ENCODE measurements at regions of chr17 and their contacts with region 1.

Region 1: DNA sequence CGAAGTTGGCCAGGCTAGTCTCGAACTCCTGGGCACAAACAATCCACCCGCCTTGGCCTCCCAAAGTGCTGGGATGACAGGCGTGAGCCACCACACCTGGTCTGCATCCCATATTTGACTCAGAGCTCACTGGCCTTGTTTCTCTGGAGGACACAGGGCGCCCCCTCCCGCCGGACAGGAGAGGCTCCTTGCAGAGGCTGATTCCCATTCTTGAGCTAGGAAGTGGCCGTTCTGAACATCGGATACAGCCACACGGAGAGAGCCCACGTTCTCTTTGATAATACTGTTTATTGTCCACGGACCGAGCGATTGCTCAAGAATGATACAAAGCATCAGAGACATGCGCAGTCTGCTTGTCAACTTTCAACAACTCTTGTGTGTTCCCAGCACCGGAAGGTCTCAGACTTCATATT is 12.1 kb upstream of the USP36 start:
- DNase-seq: no peak
- CTCF ChIP-seq: no peak

Region 2: GRCh38 chr17:78497115-78497540 is 355.6 kb before region 1 on chr17:
- CTCF ChIA-PET with region 1: interaction called, 11 read pairs
- POLR2A ChIA-PET with region 1: no interaction called
- DNase-seq: peak; percentile 85
- CTCF ChIP-seq: peak; percentile 52

Measured in GM10248 (cell line).